PC-3 (cell line): ENCODE measurements at regions of chr12 and their contacts with region 1.

Region 1: GRCh38 chr12:41264281-41264680 is 76.2 kb downstream of the PDZRN4 start:
- DNase-seq: peak; percentile 35
- ATAC-seq: peak; percentile 54; the same call in 1 of the 2 replicates
- H3K4me3 ChIP-seq: no peak overlapping the region
- H3K27ac ChIP-seq: no peak overlapping the region
- H3K4me1 ChIP-seq: no peaks in the 10 kb centered on the region
- H3K27me3 ChIP-seq: peaks cover 40% of the 10 kb centered on the region
- CTCF ChIP-seq: peak; percentile 68

Region 2: GRCh38 chr12:40946612-40947194 is 317.6 kb before region 1 on chr12:
- CTCF ChIA-PET with region 1: no interaction called
- POLR2A ChIA-PET with region 1: no interaction called
- intact Hi-C with region 1: loop called (anchors 5 kb)
- DNase-seq: peak; percentile 53
- ATAC-seq: no peak
- H3K4me3 ChIP-seq: no peak overlapping the region
- H3K27ac ChIP-seq: no peak overlapping the region
- H3K4me1 ChIP-seq: no peaks in the 10 kb centered on the region
- H3K27me3 ChIP-seq: 0 out of 2 replicates have a peak, but pooled peaks cover 6% of the 10 kb centered on the region
- CTCF ChIP-seq: peak; percentile 73

Region 3: DNA sequence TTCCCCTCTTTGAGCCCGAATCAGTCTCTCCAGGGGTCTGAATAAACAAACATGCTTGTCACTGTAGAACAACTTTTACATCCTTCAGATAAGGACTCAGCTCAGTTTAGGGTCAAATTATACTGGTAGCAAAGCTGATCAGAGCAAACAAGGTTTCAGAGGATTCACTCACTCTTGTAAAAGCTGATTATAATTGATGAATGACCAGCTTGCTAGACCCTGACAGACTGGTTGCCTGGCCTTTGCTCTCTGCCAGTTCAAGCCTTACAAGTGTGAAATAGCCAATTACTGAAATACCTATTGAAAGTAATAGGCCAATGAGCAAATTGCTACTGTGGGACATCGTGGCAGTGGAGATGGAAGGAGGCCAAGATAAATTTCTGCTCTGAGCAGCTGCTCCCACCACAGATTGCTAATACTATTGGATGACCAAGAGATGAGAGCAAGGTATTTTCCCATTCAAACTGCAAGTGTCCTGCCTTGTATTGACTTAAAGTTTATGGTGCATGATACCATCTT is 101.4 kb after region 1 on chr12:
- CTCF ChIA-PET with region 1: no interaction called
- POLR2A ChIA-PET with region 1: no interaction called
- intact Hi-C with region 1: no loop called
- DNase-seq: no peak
- ATAC-seq: no peak
- H3K4me3 ChIP-seq: no peak overlapping the region
- H3K27ac ChIP-seq: no peak overlapping the region
- H3K4me1 ChIP-seq: no peaks in the 10 kb centered on the region
- H3K27me3 ChIP-seq: no peaks in the 10 kb centered on the region
- CTCF ChIP-seq: no peak

Region 4: DNA sequence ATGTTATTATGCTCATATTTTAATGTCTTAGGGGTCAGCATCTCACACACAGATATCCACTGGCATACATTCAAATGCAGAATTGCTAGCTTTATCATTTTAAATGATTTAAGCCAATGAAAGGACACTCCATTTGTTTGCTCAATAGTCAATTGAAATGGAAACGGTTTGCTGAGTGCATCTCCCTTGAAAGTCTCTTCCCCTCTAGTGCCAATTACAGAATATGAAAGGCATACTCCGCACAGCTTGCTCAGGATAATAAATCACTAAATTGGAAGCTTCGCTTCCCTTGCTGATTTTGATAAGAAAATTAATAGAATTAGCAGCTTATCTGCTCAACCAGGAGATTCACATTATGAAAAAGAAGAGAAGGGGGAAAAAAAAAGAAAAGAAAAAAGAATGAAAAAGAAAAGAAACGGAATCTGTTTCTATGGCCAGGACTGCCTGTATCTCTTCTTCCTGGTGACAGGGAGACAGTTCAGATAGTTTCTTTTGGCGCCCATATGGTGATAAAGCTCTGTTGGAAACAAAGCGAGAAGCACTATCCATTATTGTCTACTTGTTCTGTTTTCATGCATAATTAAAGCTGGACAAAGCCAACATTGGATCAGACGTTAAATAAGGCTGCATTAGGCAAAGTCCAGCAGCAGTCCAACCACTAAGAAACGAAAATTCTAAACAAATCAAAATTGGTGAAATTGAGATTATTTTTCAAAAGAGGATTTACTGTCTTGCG is 655.4 kb after region 1 on chr12:
- CTCF ChIA-PET with region 1: no interaction called
- POLR2A ChIA-PET with region 1: no interaction called
- intact Hi-C with region 1: loop called (anchors 10 kb)
- DNase-seq: no peak
- ATAC-seq: no peak
- H3K4me3 ChIP-seq: no peak overlapping the region
- H3K27ac ChIP-seq: no peak overlapping the region
- H3K4me1 ChIP-seq: no peaks in the 10 kb centered on the region
- H3K27me3 ChIP-seq: peaks cover 58% of the 10 kb centered on the region
- CTCF ChIP-seq: no peak

Region 5: GRCh38 chr12:42104087-42104486 is 839.8 kb after region 1 on chr12:
- CTCF ChIA-PET with region 1: interaction called, 3 read pairs
- POLR2A ChIA-PET with region 1: no interaction called
- intact Hi-C with region 1: loop called (anchors 1 kb)
- DNase-seq: no peak
- ATAC-seq: no peak
- H3K4me3 ChIP-seq: no peak overlapping the region
- H3K27ac ChIP-seq: no peak overlapping the region
- H3K4me1 ChIP-seq: no peaks in the 10 kb centered on the region
- H3K27me3 ChIP-seq: no peaks in the 10 kb centered on the region
- CTCF ChIP-seq: peak; percentile 55; the same call in 1 of the 2 replicates